HCT116 (cell line): ENCODE measurements at regions of chr1 and their contacts with region 1.

Region 1: DNA sequence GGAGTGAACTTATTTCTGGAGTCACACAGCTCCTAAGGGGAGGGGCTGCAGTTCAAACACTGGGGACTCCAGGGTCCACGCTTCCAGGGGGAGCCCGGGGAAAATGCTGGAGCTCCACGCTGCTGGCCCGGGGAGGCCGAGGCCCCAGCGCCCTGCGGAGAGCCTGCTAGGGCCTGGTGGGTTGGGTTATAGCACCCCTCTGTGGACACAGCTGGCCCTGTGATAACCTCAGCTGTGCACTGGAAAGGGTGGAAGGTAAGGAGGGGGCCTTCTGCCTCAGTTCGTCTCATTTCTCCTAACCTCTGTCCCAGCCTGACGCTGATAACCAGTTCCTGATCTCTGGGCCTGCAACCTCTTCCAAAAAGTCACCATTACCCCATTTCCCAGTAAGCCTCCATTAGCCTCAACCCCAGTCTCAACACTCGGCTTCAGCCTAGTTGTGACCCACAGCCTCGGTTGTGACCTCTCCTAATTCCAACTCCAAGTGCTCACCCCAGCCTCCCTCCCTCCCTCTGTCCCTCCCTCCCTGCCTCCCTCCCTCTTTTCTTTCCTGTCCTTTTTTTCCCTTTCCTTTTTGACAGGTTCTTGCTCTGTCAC is 7.1 kb downstream of the NBL1 start:
- DNase-seq: no peak
- ATAC-seq: peak; percentile 53
- H3K4me3 ChIP-seq: no peak overlapping the region
- H3K27ac ChIP-seq: no peak overlapping the region
- H3K4me1 ChIP-seq: peaks cover 17 to 42% of the 10 kb centered on the region in 2 experiments
- H3K27me3 ChIP-seq: no peaks in the 10 kb centered on the region
- CTCF ChIP-seq: peak; percentile 49 to 66 (median 55); a peak in 5 of 6 replicates
- POLR2A ChIP-seq: no peak
- RAD21 ChIP-seq: peak; percentile 82

Region 2: DNA sequence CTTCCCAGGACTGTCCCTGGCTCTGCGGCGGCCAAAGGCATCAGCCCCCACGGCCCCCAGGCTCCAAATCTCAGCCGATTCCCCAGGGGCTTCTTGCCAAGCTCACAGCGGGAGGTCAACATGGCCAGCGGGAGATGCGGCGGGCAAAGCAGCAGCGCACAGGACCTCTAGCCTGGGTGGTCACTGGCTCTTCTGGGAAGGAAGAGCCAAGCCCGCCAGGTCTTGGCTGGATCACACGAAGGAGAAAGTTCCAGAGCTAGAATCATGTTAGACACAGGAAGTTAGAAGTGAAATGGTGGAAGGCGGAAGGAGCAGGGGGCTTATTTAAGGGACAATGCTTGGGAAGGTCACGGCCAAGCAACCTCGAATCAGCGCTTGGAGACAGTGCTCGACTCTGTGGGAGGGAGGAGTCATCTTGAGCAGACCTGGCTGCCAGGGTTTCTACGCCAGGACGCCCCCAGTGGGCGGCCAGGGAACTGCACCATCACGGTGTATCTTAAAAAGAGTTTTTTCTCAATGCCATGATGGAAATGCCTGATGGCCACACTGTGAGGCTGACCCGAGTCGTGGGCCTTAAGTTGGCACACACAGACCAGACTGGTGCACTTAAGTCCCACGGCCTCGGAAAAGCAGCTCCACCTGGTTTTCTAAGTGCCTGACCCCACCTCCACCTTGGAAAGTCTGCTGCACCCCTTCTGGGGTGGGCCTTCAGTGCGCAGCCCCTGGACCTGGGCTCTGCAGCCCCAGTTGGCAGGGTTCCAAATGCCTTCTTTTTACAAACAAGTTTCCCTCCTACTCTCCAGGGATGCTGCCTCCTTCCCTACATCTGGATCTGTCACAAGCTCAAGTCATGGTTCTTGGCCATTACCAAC is 309.8 kb before region 1 on chr1:
- CTCF ChIA-PET with region 1: interaction called, 6 read pairs
- POLR2A ChIA-PET with region 1: no interaction called
- RAD21 ChIA-PET with region 1: no interaction called
- intact Hi-C with region 1: loop called (anchors 2 kb)
- DNase-seq: peak; percentile 62
- ATAC-seq: peak; percentile 81
- H3K4me3 ChIP-seq: no peak overlapping the region
- H3K27ac ChIP-seq: no peak overlapping the region
- H3K4me1 ChIP-seq: peaks cover 25 to 30% of the 10 kb centered on the region in 2 experiments
- H3K27me3 ChIP-seq: no peaks in the 10 kb centered on the region
- CTCF ChIP-seq: peak; percentile 32 to 94 (median 87); a peak in 5 of 6 replicates
- POLR2A ChIP-seq: no peak
- RAD21 ChIP-seq: peak; percentile 53

Region 3: GRCh38 chr1:19390901-19391595 is 260.2 kb before region 1 on chr1:
- CTCF ChIA-PET with region 1: interaction called, 5 read pairs
- POLR2A ChIA-PET with region 1: no interaction called
- RAD21 ChIA-PET with region 1: interaction called in 1 of 2 experiments, 6 read pairs
- intact Hi-C with region 1: loop called (anchors 1 kb)
- DNase-seq: peak; percentile 7
- ATAC-seq: peak; percentile 68
- H3K4me3 ChIP-seq: no peak overlapping the region
- H3K27ac ChIP-seq: no peak overlapping the region
- H3K4me1 ChIP-seq: no peaks in the 10 kb centered on the region; a peak in 1 of 4 replicates
- H3K27me3 ChIP-seq: no peaks in the 10 kb centered on the region
- CTCF ChIP-seq: peak; percentile 62 to 84 (median 81)
- POLR2A ChIP-seq: no peak
- RAD21 ChIP-seq: peak; percentile 67

Region 4: DNA sequence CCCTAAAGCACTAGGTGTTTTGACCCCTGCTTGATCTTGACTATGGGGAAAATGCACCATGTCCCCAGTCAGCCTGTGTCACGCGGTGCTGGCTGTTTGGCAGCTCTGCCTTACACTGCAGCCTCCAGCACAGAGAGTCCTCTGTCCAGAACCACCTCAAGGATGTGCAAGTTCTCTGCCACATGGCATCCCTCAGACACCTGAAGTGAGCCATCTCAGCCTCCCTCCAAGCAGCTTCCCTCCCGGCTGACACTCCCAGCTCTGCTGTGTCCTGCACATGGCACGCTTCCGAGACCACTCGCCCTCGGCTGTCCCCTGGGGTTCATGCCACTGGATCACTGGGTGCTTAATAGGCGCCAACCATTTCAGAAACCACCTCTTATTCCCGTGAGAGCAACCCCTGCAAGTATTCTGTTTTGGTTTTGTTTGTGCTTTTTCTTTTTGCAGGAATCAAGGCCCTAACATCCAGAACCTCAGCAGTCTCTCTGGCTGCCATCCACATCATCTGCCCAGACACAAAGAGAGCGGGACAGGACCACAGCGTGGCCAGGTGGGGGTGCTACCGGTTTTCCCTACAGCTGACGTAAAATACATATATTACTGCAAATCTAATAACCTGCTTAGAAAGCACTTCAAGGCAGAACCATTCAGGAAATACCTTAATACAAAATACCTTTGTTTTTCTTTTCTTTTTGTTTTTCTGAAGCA is 211.6 kb before region 1 on chr1:
- CTCF ChIA-PET with region 1: interaction called, 3 read pairs
- POLR2A ChIA-PET with region 1: no interaction called
- RAD21 ChIA-PET with region 1: no interaction called
- intact Hi-C with region 1: loop called (anchors 5 kb)
- DNase-seq: no peak
- ATAC-seq: 0 out of 2 replicates have a peak, but pooled peaks have one; percentile 35
- H3K4me3 ChIP-seq: no peak overlapping the region
- H3K27ac ChIP-seq: no peak overlapping the region
- H3K4me1 ChIP-seq: peaks cover 15 to 31% of the 10 kb centered on the region in 2 experiments
- H3K27me3 ChIP-seq: no peaks in the 10 kb centered on the region
- CTCF ChIP-seq: peak; percentile 39 to 52 (median 43); a peak in 5 of 6 replicates
- POLR2A ChIP-seq: no peak
- RAD21 ChIP-seq: peak; percentile 64

Region 5: GRCh38 chr1:19616489-19616888 is 34.8 kb before region 1 on chr1:
- CTCF ChIA-PET with region 1: no interaction called
- POLR2A ChIA-PET with region 1: no interaction called
- RAD21 ChIA-PET with region 1: no interaction called
- intact Hi-C with region 1: no loop called
- DNase-seq: no peak
- ATAC-seq: no peak
- H3K4me3 ChIP-seq: no peak overlapping the region
- H3K27ac ChIP-seq: no peak overlapping the region
- H3K4me1 ChIP-seq: no peaks in the 10 kb centered on the region
- H3K27me3 ChIP-seq: no peaks in the 10 kb centered on the region
- CTCF ChIP-seq: no peak
- POLR2A ChIP-seq: no peak
- RAD21 ChIP-seq: no peak